ENCODE measurements at regions of chr12 and their contacts with region 1.

Region 1: GRCh38 chr12:49967042-49967776 is 5.5 kb downstream of the AQP5 start:
- DNase-seq: peak; percentile 57
- ATAC-seq: peak; percentile 84
- H3K4me3 ChIP-seq: peak overlapping the region; percentile 33 to 64
- H3K27ac ChIP-seq: peak overlapping the region; percentile 71
- H3K4me1 ChIP-seq: peaks cover 25% of the 10 kb centered on the region
- H3K27me3 ChIP-seq: no peaks in the 10 kb centered on the region
- CTCF ChIP-seq: peak; percentile 95

Region 2: DNA sequence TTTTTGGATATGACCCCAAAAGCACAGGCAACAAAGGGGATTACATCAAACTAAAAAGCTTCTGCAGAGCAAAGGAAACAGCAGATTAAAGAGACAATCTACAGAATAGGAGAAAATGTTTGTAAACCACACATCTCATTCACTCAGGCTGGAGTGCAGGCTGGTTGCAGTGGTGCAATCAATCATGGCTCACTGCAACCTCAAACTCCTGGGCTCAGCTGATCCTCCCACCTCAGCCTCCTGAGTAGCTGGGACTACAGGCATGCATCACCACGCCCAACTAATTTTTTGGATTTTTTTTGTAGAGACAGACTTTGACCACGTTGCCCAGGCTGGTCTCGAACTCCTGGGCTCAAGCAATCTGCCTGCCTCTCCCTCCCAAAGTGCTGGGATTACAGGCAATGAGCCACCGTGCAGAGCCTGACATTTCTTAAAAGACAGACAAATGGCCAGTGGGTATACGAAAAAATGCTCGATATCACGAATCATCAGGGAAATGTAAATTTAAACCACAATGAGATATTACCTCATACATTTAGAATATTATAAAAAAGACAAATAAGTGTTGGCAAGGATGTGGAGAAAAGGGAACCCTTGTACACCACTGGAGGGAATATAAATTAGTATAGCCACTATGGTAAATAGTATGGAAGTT is 148.8 kb before region 1 on chr12:
- CTCF ChIA-PET with region 1: no interaction called
- POLR2A ChIA-PET with region 1: no interaction called
- in situ Hi-C with region 1: no loop called
- intact Hi-C with region 1: no loop called
- DNase-seq: no peak
- ATAC-seq: no peak
- H3K4me3 ChIP-seq: no peak overlapping the region
- H3K27ac ChIP-seq: no peak overlapping the region
- H3K4me1 ChIP-seq: no peaks in the 10 kb centered on the region
- H3K27me3 ChIP-seq: no peaks in the 10 kb centered on the region
- CTCF ChIP-seq: no peak

Region 3: GRCh38 chr12:49923880-49924556 is 43.2 kb before region 1 on chr12:
- CTCF ChIA-PET with region 1: interaction called, 13 read pairs
- POLR2A ChIA-PET with region 1: no interaction called
- in situ Hi-C with region 1: no loop called
- intact Hi-C with region 1: no loop called
- DNase-seq: no peak
- ATAC-seq: no peak
- H3K4me3 ChIP-seq: no peak overlapping the region
- H3K27ac ChIP-seq: no peak overlapping the region
- H3K4me1 ChIP-seq: no peaks in the 10 kb centered on the region
- H3K27me3 ChIP-seq: no peaks in the 10 kb centered on the region
- CTCF ChIP-seq: no peak

Region 4: GRCh38 chr12:49953146-49953545 is 14.1 kb before region 1 on chr12:
- CTCF ChIA-PET with region 1: interaction called, 3 read pairs
- POLR2A ChIA-PET with region 1: interaction called, 10 read pairs
- in situ Hi-C with region 1: no loop called
- intact Hi-C with region 1: no loop called
- DNase-seq: no peak
- ATAC-seq: no peak
- H3K4me3 ChIP-seq: no peak overlapping the region
- H3K27ac ChIP-seq: peak overlapping the region; percentile 34; the same call in 1 of the 2 replicates
- H3K4me1 ChIP-seq: no peaks in the 10 kb centered on the region
- H3K27me3 ChIP-seq: no peaks in the 10 kb centered on the region
- CTCF ChIP-seq: no peak

Region 5: GRCh38 chr12:50055831-50056638 is 88.8 kb after region 1 on chr12:
- CTCF ChIA-PET with region 1: interaction called, 17 read pairs
- POLR2A ChIA-PET with region 1: no interaction called
- in situ Hi-C with region 1: no loop called
- intact Hi-C with region 1: loop called (anchors 5 kb)
- DNase-seq: no peak
- ATAC-seq: peak; percentile 69
- H3K4me3 ChIP-seq: peak overlapping the region in 1 of 2 experiments; percentile 25; a peak in 1 of 4 replicates
- H3K27ac ChIP-seq: no peak overlapping the region
- H3K4me1 ChIP-seq: peaks cover 13% of the 10 kb centered on the region
- H3K27me3 ChIP-seq: 0 out of 2 replicates have a peak, but pooled peaks cover 4% of the 10 kb centered on the region
- CTCF ChIP-seq: peak; percentile 97

Measured in Panc1 (cell line).